Activated T-helper 1 cell treated with anti-CD3 and anti-CD28 coated beads, Interleukin-12 subunit alpha, Interleukin-12 subunit beta, Interleukin-2, Interleukin-4 antibody, amounts not matched to agents 30 ng/mL and 10 ng/mL and 1 ng/mL, durations not matched to agents 14 hours and 24 hours and 36 hours (primary cell): ENCODE measurements at regions of chr1 and their contacts with region 1.

Region 1: GRCh38 chr1:202501281-202501680 is 152.8 kb downstream of the PPP1R12B start:
- DNase-seq: no peak
- H3K4me3 Mint-ChIP-seq: no peak overlapping the region
- H3K27ac Mint-ChIP-seq: no peak overlapping the region
- H3K4me1 Mint-ChIP-seq: no peaks in the 10 kb centered on the region
- H3K27me3 Mint-ChIP-seq: no peaks in the 10 kb centered on the region

Region 2: DNA sequence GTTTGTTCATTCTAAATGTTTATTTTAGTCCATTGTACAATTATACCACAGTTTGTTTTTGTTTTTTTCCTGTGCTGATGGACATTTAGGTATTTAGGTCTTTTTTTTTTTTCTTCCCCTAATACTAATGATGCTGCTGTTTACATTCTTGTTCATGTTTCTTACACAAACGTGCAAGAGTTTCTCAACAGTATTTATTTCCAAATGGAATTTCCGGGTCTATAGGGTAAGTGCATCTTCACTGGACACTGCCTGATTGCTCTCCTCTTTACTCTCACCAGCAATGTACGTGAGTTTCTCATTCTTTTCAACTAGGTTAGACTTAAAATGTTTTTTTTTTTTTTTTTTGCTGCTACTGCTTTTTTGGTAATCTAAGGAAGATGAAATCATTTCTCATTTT is 30.0 kb before region 1 on chr1:
- intact Hi-C with region 1: no loop called
- DNase-seq: no peak
- H3K4me3 Mint-ChIP-seq: no peak overlapping the region
- H3K27ac Mint-ChIP-seq: no peak overlapping the region
- H3K4me1 Mint-ChIP-seq: no peaks in the 10 kb centered on the region
- H3K27me3 Mint-ChIP-seq: peaks cover 3% of the 10 kb centered on the region

Region 3: DNA sequence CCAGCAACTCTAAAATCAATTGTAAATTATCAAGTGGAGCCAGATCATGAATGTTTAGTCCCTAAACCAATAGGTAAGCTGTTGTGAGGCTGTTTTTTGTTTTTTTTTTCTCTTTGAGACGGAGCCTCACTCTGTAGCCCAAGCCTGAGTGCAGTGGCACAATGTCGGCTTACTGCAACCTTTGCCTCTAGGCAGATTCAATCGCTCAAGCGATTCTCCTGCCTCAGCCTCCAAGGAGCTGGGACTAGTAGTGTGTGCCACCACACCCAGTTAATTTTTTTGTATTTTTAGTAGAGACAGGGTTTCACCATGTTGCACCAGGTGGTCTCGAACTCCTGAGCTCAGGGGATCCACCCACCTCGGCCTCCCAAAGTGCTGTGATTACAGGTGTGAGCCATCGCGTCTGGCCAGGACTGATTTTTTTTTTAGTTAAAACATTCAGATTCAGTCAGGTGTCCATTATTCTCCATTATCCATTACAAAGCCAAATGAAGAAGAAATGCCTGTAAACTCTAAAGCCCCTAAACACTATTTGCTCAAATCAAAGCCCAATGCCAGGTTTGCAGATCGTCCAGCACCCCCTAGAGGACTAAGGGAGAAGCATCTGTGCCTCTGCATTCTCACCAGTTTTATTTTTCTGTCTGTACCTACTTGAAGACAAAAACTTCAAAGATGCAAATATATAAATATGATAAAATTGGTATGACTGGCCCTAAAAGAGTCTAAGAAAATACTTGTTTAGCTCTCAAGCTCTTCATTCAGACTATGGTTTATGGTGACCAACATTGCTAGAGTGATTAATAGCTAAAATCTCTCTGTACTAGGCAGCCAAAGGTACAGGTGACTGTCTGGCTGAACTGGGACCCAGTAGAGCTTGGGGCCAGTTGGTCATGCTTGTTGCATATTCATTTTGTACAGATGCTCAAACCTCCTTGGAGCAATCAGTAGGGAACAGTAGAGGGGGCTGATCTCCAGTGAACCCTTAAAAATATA is 70.4 kb after region 1 on chr1:
- intact Hi-C with region 1: loop called (anchors 5 kb)
- DNase-seq: no peak
- H3K4me3 Mint-ChIP-seq: no peak overlapping the region
- H3K27ac Mint-ChIP-seq: no peak overlapping the region
- H3K4me1 Mint-ChIP-seq: peaks cover 6% of the 10 kb centered on the region
- H3K27me3 Mint-ChIP-seq: no peaks in the 10 kb centered on the region

Region 4: GRCh38 chr1:202599677-202600431 is 98.6 kb after region 1 on chr1:
- intact Hi-C with region 1: loop called (anchors 1 kb)
- DNase-seq: no peak
- H3K4me3 Mint-ChIP-seq: no peak overlapping the region
- H3K27ac Mint-ChIP-seq: no peak overlapping the region
- H3K4me1 Mint-ChIP-seq: no peaks in the 10 kb centered on the region
- H3K27me3 Mint-ChIP-seq: peaks cover 5% of the 10 kb centered on the region

Region 5: GRCh38 chr1:202625416-202626360 is 124.4 kb after region 1 on chr1:
- intact Hi-C with region 1: loop called (anchors 1 kb)
- DNase-seq: peak; percentile 44
- H3K4me3 Mint-ChIP-seq: no peak overlapping the region
- H3K27ac Mint-ChIP-seq: no peak overlapping the region
- H3K4me1 Mint-ChIP-seq: peaks cover 19% of the 10 kb centered on the region
- H3K27me3 Mint-ChIP-seq: peaks cover 36% of the 10 kb centered on the region

Region 6: GRCh38 chr1:202716654-202717053 is 215.4 kb after region 1 on chr1:
- intact Hi-C with region 1: loop called (anchors 1 kb)
- DNase-seq: no peak
- H3K4me3 Mint-ChIP-seq: no peak overlapping the region
- H3K27ac Mint-ChIP-seq: no peak overlapping the region
- H3K4me1 Mint-ChIP-seq: no peaks in the 10 kb centered on the region
- H3K27me3 Mint-ChIP-seq: peaks cover 48% of the 10 kb centered on the region